Aorta (tissue), 5 donors: ENCODE measurements at regions of chr17 and their contacts with region 1.

Region 1: DNA sequence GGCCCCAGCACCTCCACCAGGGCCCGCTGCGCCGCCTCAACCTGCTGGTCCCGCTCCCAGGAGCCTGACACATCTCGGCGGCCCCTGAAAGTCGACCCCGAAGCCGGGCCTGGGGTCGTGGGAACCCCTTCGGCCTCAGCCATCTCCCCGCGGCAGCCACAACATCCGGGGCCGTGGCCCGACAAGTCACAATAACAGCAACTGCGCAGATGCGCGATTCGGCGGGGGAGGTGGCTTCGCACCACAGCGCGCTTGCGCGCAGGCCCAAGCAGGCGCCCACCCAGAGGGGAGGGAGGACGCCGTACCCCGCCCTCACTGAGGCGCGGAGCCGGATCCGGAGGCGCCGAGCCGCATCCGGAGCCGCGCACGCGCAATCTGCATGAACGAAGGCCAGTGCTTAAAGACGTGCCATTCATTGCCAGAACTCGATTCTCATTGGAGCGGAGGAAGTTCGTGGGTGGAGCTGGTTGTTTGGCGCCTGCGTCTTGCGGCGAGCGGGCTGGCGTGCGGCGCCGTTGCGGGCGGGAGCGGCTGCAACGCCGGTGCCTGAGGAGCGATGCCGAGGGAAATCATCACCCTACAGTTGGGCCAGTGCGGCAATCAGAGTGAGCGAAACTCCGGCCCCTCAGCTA is at the starts of genes RETREG3 and TUBG1:
- DNase-seq: peak; percentile 99 to 100
- ATAC-seq: peak; percentile 99
- H3K4me3 ChIP-seq: peak within 1 kb of the TSS; percentile 82 to 97
- H3K27ac ChIP-seq: peak within 1 kb of the TSS; percentile 5 to 64
- H3K4me1 ChIP-seq: no peaks in the 10 kb centered on the region
- H3K27me3 ChIP-seq: no peaks in the 10 kb centered on the region
- total RNA-seq, gene RETREG3: 42.9 to 54.1 TPM
- total RNA-seq, gene TUBG1: 21.5 to 24.9 TPM

Region 2: DNA sequence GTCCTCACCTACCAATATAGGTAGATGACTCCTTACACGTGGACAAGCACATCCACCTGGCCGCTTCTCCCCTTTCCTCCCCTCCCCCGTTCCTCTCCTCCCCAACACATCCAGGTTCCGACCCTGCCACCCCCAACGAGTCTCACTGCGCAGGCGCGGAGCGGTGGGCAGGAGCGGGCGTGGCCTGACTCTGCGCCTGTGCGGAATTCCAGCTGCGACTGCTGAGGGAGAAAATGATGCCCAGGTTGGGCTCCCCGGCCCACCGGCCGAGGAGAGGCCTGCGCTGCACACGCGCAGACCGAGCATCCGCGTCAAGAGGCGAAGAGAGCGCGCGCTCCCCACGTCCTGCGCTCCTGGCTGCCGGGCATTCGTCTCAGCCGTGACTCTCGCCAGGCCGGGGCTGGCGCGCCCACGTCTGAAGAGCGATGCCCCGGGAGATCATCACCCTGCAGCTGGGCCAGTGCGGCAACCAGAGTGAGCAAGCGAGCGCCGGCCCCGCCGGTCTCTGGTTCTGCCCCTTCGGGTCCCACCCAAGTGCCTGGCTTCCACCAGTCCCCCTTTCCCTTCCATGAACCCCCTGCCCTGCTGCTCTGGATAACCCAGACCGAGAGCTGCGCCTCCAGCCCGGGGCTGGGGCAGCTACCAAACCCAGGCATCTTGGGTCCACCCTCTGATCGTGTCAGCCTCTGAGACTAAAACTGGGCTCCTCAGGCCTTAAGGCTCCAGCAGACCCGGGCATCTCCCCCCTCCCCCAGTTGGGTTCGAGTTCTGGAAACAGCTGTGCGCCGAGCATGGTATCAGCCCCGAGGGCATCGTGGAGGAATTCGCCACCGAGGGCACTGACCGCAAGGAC is 50.0 kb after region 1 on chr17 and contains the start of gene TUBG2:
- intact Hi-C with region 1: loop called (anchors 5 kb)
- DNase-seq: peak; percentile 93 to 96
- ATAC-seq: peak; percentile 93
- H3K4me3 ChIP-seq: peak within 1 kb of the TSS; percentile 30 to 66
- H3K27ac ChIP-seq: peak within 1 kb of the TSS; percentile 9 to 81
- H3K4me1 ChIP-seq: no peaks in the 10 kb centered on the region
- H3K27me3 ChIP-seq: no peaks in the 10 kb centered on the region
- total RNA-seq, gene TUBG2: 23.4 to 42.6 TPM

Region 3: DNA sequence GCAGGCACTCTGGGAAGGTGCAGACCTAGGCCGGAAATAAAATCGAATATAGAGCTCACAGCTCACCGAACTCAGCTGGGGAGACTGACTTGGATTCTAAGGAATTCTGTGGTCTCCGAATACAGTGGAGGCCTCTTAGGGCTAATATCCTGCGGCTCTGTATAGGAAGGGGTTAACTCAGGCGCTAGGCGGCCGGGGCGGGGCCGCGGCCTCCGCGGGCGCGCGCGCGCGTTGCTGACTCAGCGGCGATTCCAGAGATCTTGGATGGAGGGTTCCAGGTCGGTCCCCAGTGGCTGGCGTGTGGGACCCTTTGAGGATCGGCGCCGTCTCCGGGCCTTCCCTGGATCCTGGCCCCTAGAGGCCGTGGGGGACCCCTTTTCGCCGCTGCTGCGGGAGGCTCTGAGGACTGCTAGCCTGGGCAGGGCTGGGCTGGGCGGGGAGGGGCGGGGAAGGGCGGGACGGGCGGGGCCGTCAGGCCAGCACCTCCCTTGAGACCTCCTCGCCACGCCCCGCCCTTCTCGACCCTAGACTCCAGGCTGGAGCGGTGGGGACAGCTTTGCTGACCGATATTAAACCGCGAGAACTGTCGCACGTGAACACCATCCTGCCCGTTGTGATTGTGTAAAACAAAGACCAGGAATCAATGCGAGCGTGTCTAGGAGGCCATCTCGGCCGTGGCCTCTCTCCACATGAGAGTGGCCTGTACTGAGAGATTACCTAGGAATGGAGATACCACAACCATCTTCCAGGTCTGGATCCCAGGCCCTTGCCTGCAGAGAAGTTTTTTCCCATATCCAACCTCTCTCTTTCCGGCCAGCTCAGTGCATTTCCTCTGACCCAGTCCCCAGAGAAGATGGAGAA is 68.9 kb after region 1 on chr17:
- intact Hi-C with region 1: loop called (anchors 2 to 5 kb)
- DNase-seq: peak; percentile 92 to 95
- ATAC-seq: peak; percentile 69
- H3K4me3 ChIP-seq: peak overlapping the region; percentile 50 to 59
- H3K27ac ChIP-seq: peak overlapping the region in 1 of 2 donors; percentile 92
- H3K4me1 ChIP-seq: no peaks in the 10 kb centered on the region
- H3K27me3 ChIP-seq: no peaks in the 10 kb centered on the region